Caco-2 (cell line): ENCODE measurements at regions of chr17 and their contacts with region 1.

Region 1: DNA sequence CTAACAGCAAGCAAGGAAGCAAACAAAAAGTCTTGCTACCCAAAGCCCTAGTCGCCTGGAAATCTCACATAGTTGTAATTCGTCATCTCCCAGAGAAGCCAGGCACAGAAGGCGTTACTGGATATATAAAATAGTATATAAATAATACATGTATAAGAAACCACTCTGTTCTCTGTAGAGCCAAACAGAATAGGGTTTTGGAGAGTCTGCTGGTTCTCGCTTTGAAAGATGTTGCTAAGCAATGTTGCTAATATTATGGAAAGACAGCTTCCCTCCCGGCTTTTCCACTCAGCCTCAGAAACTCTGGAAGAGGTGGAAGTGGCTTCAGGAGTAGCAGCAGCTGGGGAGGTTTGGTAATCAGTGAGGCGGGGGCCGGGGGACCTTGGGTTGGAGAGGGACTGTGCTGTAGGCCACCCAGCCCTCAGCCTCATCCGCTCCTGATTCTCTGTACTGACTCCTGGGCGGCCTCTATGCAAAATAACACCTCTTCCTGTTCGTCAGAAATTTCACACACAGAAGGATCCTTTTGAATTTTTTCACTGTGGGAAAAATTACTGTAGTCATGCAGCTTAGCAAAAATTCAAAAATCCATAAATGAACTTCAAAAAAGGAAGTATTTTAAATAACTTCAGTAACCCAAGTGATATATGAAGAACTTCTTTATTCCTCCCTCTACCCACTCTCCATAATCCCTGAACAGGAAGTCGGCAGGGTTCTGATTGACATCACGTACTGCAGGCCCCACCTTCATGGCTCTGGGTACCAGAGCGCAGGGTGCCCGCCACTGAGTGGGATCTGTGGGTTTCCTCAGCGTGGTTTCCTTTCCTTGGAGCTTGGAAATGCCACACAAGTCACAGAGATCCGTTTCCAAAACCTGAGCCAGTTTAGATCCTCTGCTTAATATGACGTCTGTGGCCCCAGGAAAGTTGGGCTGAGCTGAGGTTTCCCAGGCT is 51.4 kb downstream of the RAP1GAP2 start:
- DNase-seq: no peak
- H3K4me3 ChIP-seq: no peak overlapping the region
- H3K4me3 Mint-ChIP-seq: no peak overlapping the region
- H3K27ac Mint-ChIP-seq: no peak overlapping the region
- H3K4me1 ChIP-seq: peaks cover 9% of the 10 kb centered on the region
- H3K4me1 Mint-ChIP-seq: peaks cover 18% of the 10 kb centered on the region
- H3K27me3 ChIP-seq: no peaks in the 10 kb centered on the region
- H3K27me3 Mint-ChIP-seq: no peaks in the 10 kb centered on the region
- CTCF ChIP-seq: no peak

Region 2: GRCh38 chr17:2929881-2930533 is 82.3 kb after region 1 on chr17:
- CTCF ChIA-PET with region 1: interaction called, 32 read pairs
- POLR2A ChIA-PET with region 1: no interaction called
- intact Hi-C with region 1: loop called (anchors 1 kb)
- DNase-seq: peak; percentile 74 to 75
- H3K4me3 ChIP-seq: no peak overlapping the region
- H3K4me3 Mint-ChIP-seq: no peak overlapping the region
- H3K27ac Mint-ChIP-seq: no peak overlapping the region
- H3K4me1 ChIP-seq: peaks cover 11% of the 10 kb centered on the region; the same call in 1 of the 2 replicates
- H3K4me1 Mint-ChIP-seq: peaks cover 12% of the 10 kb centered on the region
- H3K27me3 ChIP-seq: no peaks in the 10 kb centered on the region
- H3K27me3 Mint-ChIP-seq: no peaks in the 10 kb centered on the region
- CTCF ChIP-seq: peak; percentile 89 to 93